ENCODE measurements at regions of chr13 and their contacts with region 1.

Region 1: DNA sequence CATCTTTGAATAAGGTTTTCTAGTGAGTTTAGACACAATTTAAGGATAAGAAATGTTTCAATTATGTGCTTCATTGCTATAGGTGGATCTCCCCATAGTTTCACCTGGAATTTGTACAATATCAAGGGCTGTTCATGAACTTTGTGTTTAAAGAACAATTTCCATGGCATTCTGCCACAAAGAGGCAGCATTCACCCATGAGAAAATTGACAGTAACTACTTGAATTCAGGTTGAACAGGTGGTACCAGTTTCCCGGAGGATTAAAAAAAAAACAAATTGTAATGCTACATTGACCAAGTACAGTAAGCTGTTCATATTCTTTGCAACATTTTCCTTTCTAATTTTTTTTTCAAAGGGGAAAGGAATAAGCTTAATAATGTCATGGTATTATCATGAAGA is 9.1 kb downstream of the SLITRK5 start:
- DNase-seq: peak; percentile 38 to 79
- H3K4me3 ChIP-seq: no peak overlapping the region
- H3K27ac ChIP-seq: no peak overlapping the region
- H3K4me1 ChIP-seq: peaks cover 10% of the 10 kb centered on the region
- H3K27me3 ChIP-seq: no peaks in the 10 kb centered on the region
- CTCF ChIP-seq: peak; percentile 52

Region 2: DNA sequence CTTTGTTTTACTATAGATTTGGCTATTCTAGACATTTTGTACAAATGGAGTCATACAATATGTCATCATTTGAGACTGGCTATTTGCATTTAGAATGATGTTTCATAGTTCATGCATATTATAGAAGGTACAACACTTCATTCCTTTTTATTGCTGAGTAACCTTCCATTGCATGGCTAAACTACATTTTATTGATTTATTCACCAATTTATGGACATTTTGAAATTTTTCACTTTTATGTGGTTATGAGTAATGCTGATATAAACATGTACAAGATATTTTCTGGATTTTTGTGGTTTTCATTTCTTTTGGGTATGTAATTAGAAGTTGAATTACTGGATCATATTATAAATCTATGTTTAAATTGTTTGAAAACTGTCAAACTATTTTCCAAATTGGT is 719.4 kb before region 1 on chr13:
- CTCF ChIA-PET with region 1: no interaction called
- POLR2A ChIA-PET with region 1: no interaction called
- intact Hi-C with region 1: no loop called
- DNase-seq: no peak
- H3K4me3 ChIP-seq: no peak overlapping the region
- H3K27ac ChIP-seq: no peak overlapping the region
- H3K4me1 ChIP-seq: no peaks in the 10 kb centered on the region
- H3K27me3 ChIP-seq: no peaks in the 10 kb centered on the region
- CTCF ChIP-seq: no peak

Region 3: GRCh38 chr13:87453244-87453643 is 227.1 kb before region 1 on chr13:
- CTCF ChIA-PET with region 1: no interaction called
- POLR2A ChIA-PET with region 1: no interaction called
- intact Hi-C with region 1: no loop called
- DNase-seq: no peak
- H3K4me3 ChIP-seq: no peak overlapping the region
- H3K27ac ChIP-seq: no peak overlapping the region
- H3K4me1 ChIP-seq: no peaks in the 10 kb centered on the region
- H3K27me3 ChIP-seq: no peaks in the 10 kb centered on the region
- CTCF ChIP-seq: no peak

Region 4: DNA sequence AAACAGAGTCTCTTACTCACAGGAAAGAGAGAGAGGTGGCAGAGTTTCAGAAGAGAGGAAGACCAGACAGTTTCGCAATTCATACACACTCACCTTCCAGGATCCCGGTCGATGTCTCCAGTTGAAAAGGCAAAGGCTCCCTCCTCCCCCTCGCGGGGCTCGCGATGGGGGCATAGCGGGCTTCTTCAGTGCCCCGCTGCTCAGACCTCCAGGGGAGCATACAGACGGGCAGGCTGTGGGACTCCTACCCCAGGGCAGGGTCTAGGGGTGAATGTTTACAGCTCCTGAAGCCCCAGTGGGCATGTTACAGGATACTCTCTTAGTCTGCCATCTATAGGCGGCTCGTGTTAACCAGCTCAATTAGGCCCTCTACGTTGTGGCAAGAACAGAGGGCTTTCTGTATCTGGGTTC is 130.1 kb after region 1 on chr13:
- CTCF ChIA-PET with region 1: interaction called, 4 read pairs
- POLR2A ChIA-PET with region 1: no interaction called
- intact Hi-C with region 1: loop called (anchors 5 kb)
- DNase-seq: peak; percentile 44 to 69
- H3K4me3 ChIP-seq: peak overlapping the region; percentile 86
- H3K27ac ChIP-seq: peak overlapping the region; percentile 43; the same call in 1 of the 2 replicates
- H3K4me1 ChIP-seq: peaks cover 13% of the 10 kb centered on the region
- H3K27me3 ChIP-seq: no peaks in the 10 kb centered on the region
- CTCF ChIP-seq: peak; percentile 65

Region 5: DNA sequence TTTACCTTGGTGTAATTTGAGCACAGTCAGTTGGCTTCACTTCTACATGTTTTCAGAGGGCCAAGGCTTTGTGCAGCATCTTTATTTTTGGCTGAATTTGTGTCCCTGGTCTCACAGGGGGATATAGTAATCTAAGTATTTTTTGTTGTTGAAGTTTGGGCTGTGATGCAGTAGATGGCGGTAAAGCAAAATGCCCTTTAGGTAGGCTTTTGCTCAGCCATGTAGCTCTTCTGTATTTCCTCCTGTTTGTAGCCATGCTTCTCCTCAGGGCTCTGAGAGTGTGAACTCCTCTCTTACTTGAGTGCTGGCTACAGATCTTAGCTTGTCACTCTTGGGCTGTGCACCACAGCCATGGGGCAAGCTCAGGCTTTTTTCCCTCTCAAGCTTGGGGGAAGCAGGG is 319.5 kb after region 1 on chr13:
- CTCF ChIA-PET with region 1: no interaction called
- POLR2A ChIA-PET with region 1: no interaction called
- intact Hi-C with region 1: loop called (anchors 5 kb)
- DNase-seq: no peak
- H3K4me3 ChIP-seq: no peak overlapping the region
- H3K27ac ChIP-seq: no peak overlapping the region
- H3K4me1 ChIP-seq: 0 out of 2 replicates have a peak, but pooled peaks cover 8% of the 10 kb centered on the region
- H3K27me3 ChIP-seq: no peaks in the 10 kb centered on the region
- CTCF ChIP-seq: no peak

Region 6: DNA sequence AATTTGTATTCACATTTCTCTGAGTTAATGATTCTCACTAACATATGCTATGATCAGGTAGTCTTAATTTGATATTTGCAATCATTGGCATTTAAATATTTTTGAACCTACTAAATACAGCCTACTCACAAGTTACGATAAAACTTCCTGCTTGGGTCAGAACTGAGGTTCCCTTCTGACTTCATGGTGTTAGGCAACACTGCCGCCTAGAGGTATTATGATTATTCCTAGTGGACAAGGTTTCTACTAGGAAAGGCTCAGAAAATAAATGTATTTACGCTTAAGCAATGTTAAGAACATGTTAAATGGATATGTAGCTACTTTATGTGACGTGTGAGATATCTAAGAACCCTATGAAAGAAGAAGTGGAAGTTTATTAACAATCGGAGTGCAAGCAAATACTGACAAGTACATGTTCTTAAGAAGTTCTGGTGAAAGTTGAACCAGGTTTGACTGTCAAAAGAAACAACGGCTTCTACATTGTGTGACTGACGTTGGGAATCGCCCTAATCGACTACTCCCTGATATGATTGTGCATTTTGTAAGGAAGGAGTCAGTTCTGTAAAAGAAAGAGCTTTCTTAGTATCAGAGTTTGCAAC is 1386.7 kb after region 1 on chr13:
- CTCF ChIA-PET with region 1: no interaction called
- POLR2A ChIA-PET with region 1: no interaction called
- intact Hi-C with region 1: loop called (anchors 2 kb)
- DNase-seq: peak in 1 of 2 experiments; percentile 13
- H3K4me3 ChIP-seq: no peak overlapping the region
- H3K27ac ChIP-seq: no peak overlapping the region
- H3K4me1 ChIP-seq: no peaks in the 10 kb centered on the region
- H3K27me3 ChIP-seq: no peaks in the 10 kb centered on the region
- CTCF ChIP-seq: peak; percentile 60; the same call in 1 of the 2 replicates

Measured in PC-9 (cell line).